ENCODE measurements at regions of chr11 and their contacts with region 1.

Region 1: GRCh38 chr11:12706545-12707499 is 32.6 kb downstream of the TEAD1 start:
- DNase-seq: no peak
- H3K4me3 ChIP-seq: no peak overlapping the region
- H3K27ac ChIP-seq: no peak overlapping the region
- H3K4me1 ChIP-seq: peaks cover 11% of the 10 kb centered on the region; the same call in 1 of the 2 replicates
- H3K27me3 ChIP-seq: no peaks in the 10 kb centered on the region
- CTCF ChIP-seq: no peak

Region 2: GRCh38 chr11:12587333-12587991 is 119.4 kb before region 1 on chr11:
- CTCF ChIA-PET with region 1: no interaction called
- POLR2A ChIA-PET with region 1: no interaction called
- intact Hi-C with region 1: no loop called
- DNase-seq: peak; percentile 18 to 74
- H3K4me3 ChIP-seq: no peak overlapping the region
- H3K27ac ChIP-seq: no peak overlapping the region
- H3K4me1 ChIP-seq: peaks cover 9% of the 10 kb centered on the region; the same call in 1 of the 2 replicates
- H3K27me3 ChIP-seq: no peaks in the 10 kb centered on the region
- CTCF ChIP-seq: no peak

Region 3: DNA sequence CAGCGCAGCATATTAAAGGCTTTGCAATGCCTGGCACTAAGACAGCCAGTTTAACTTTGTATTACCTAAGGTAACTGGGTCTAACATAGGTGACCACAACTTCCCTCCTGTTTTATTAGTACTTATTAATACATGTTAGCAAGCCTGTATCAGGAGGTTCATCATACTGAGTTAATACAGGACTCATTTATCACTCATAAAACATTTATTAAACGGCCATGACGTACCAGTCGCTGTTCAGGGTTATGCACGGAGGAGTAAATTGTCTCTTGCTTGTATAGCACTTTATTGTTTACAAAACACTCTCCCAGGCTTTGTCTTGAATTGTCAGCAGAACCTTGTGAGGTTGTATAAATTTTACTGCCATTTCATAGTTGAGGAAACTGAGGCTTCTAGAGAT is 23.1 kb after region 1 on chr11:
- CTCF ChIA-PET with region 1: no interaction called
- POLR2A ChIA-PET with region 1: interaction called, 13 read pairs
- intact Hi-C with region 1: no loop called
- DNase-seq: no peak
- H3K4me3 ChIP-seq: no peak overlapping the region
- H3K27ac ChIP-seq: no peak overlapping the region
- H3K4me1 ChIP-seq: peaks cover 44% of the 10 kb centered on the region
- H3K27me3 ChIP-seq: no peaks in the 10 kb centered on the region
- CTCF ChIP-seq: no peak